Colonic mucosa (tissue), 4 donors: ENCODE measurements at regions of chr1 and their contacts with region 1.

Region 1: GRCh38 chr1:47738560-47739182 is 258.5 kb downstream of the TRABD2B start:
- DNase-seq: peak; percentile 59
- H3K4me3 ChIP-seq: no peak overlapping the region
- H3K27ac ChIP-seq: no peak overlapping the region
- H3K4me1 ChIP-seq: no peaks in the 10 kb centered on the region
- H3K27me3 ChIP-seq: no peaks in the 10 kb centered on the region
- CTCF ChIP-seq: peak; percentile 68

Region 2: DNA sequence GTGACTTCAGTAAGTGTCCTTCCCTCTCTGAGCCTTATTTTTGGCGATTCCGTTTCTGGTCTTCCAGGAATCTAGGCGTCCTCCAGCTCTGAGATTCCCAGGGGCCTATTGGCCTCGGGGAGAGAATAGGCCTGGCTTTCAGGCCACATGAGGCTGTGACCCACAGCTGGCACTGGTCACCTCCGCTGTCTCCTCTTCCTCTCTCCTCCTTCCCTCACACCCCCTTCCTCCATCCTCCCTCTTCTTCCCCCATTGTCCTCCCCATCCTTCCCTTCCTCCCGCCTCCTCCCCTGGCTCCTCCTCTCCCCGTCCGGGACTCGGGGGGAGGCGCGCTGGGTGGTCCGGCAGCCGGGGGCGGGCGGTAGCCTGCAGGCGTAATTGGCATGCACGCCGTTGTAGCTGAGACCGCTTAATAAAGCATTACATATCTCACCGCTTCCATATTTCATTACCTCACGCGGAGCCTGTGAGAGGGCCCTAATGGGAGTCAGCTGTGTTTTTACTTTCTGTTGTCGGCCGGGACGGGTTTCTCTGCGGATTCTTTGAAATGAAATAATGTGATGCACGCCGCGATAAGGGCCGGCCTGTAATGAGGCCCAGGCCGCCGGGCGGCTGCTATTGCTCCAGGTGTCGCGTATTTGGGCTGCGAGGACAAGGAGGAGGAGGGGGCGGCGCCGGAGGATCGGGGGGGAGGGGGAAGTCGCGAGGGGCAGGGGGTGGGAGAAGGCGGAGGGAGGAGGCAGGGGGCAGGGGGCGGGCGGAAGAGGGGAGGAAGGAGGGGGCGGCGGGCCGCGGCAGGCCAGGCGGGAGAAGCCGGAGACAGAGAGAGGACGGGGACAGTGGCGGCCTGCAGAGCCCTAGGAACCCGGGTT is 205.5 kb before region 1 on chr1:
- intact Hi-C with region 1: no loop called
- DNase-seq: no peak
- H3K4me3 ChIP-seq: peak overlapping the region; percentile 28
- H3K27ac ChIP-seq: no peak overlapping the region
- H3K4me1 ChIP-seq: peaks cover 4% of the 10 kb centered on the region
- H3K27me3 ChIP-seq: no peaks in the 10 kb centered on the region
- CTCF ChIP-seq: no peak

Region 3: DNA sequence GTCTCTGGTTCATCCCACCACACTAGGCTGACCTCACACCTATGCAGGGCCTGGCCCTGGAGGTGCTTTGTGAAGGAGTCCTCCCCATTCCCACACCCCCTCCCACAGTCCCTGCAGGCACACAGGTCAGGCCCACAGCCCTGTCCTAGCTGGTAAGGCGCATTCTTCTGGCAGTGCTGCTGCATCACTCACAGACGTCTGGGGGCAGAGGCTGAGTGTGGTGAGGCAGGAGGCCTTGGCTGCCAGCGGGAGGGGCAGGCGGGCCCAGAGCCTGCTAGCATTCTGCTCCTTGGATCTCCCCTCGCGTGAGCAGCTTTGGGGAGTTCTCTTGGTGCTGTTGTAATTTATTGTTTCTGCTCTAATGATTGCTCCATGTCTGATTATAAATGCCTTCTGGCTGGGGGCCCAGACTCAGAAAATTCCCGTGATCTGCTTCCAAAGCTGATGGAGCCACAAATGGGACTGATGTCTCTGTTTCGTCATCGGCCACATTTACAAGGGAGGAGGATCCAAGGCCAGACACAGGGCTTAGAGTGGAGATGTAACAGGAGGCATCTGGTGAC is 195.7 kb after region 1 on chr1:
- intact Hi-C with region 1: loop called (anchors 5 kb)
- DNase-seq: peak; percentile 68
- H3K4me3 ChIP-seq: no peak overlapping the region
- H3K27ac ChIP-seq: peak overlapping the region; percentile 15
- H3K4me1 ChIP-seq: no peaks in the 10 kb centered on the region
- H3K27me3 ChIP-seq: no peaks in the 10 kb centered on the region
- CTCF ChIP-seq: no peak

Region 4: GRCh38 chr1:48061162-48062136 is 322.8 kb after region 1 on chr1:
- intact Hi-C with region 1: loop called (anchors 5 kb)
- DNase-seq: peak; percentile 77
- H3K4me3 ChIP-seq: no peak overlapping the region
- H3K27ac ChIP-seq: no peak overlapping the region
- H3K4me1 ChIP-seq: no peaks in the 10 kb centered on the region
- H3K27me3 ChIP-seq: no peaks in the 10 kb centered on the region
- CTCF ChIP-seq: peak; percentile 43